GM10248 (cell line): ENCODE measurements at regions of chr3 and their contacts with region 1.

Region 1: DNA sequence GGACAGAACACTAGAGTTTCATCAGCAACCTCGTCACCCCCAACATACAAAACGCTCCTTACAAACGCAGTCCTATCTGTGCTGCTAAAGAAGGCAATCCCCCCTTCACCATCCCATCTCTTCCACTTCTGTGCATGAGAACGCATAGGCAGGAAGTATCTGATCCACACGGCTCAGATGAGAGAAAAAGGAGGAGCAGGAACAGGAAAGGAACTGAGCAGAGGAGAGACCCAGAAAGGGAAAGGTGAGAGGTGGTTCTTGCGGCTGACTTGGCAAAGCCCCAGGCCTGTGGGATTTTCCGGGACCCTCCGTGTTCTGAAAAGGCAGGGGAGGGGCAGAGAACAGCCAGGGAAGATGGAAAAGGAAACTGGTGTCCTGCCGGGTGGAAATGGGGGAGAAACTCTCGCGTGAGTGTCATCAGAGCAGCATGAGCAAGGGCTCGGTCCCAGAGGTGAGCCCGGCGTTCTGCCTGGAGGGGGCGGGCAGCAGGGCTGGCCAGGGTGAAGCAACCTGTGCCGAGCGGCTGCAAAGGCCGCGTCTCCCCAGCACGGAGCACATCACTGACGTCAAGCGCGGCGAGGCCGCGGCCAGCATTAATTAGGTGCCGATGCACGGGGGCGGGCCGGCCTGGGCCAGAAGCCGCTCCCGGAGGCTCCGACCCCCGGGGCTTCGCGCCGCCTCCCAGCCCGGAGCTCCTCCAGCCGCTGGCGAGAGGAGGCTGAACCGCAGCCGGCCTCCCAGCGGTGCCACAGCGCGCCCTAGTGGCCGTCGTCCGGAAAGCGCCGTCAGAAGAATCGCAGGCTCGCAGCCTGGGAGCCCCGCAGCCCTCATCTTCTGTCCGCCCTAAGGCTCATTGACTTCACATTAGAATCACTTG is 35.8 kb downstream of the CPN2 start:
- DNase-seq: peak; percentile 89
- CTCF ChIP-seq: peak; percentile 96

Region 2: GRCh38 chr3:193391902-193392301 is 923.4 kb before region 1 on chr3:
- CTCF ChIA-PET with region 1: no interaction called
- POLR2A ChIA-PET with region 1: no interaction called
- DNase-seq: no peak
- CTCF ChIP-seq: no peak

Region 3: GRCh38 chr3:193665370-193665989 is 649.8 kb before region 1 on chr3:
- CTCF ChIA-PET with region 1: interaction called, 27 read pairs
- POLR2A ChIA-PET with region 1: no interaction called
- DNase-seq: no peak
- CTCF ChIP-seq: peak; percentile 32

Region 4: DNA sequence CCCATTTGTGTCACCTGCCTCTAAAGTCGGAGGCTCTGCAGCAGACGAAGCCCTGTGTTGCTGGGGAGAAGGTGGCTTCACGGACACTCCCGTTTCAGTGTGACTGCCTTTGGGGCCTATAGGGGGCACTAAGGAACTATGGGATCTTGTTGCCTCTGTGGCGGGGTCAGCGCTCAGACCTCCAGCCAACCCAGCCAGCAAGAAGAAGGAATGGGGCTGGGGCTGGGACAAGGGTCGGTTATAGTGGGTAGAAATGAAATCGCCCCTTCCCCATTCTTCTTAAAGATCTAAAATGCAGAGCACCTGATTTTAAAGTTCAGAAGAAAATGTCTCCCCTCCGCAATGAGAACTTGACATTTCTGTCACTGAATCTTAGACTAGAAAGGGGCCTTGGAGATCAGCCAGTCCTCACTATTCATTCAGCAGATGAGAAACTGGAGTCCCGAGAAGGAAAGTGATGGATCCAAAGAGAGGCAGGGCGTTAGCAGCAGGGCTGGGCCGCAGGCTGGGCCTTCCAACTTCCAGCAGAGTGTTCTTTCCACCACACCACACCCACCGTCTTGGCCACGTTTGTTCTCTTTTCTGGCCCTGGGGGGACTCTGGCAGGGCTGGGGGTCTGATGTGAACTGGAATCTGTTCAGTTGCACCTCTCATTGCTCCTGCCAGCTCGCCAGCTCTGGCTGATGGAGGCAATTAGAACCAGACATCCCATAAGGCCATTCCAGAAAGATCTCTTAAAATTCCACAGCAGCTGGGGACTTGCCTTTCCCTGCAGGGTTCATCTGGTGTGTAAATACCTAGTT is 526.9 kb before region 1 on chr3:
- CTCF ChIA-PET with region 1: interaction called, 132 read pairs
- POLR2A ChIA-PET with region 1: no interaction called
- DNase-seq: peak; percentile 87
- CTCF ChIP-seq: peak; percentile 76

Region 5: DNA sequence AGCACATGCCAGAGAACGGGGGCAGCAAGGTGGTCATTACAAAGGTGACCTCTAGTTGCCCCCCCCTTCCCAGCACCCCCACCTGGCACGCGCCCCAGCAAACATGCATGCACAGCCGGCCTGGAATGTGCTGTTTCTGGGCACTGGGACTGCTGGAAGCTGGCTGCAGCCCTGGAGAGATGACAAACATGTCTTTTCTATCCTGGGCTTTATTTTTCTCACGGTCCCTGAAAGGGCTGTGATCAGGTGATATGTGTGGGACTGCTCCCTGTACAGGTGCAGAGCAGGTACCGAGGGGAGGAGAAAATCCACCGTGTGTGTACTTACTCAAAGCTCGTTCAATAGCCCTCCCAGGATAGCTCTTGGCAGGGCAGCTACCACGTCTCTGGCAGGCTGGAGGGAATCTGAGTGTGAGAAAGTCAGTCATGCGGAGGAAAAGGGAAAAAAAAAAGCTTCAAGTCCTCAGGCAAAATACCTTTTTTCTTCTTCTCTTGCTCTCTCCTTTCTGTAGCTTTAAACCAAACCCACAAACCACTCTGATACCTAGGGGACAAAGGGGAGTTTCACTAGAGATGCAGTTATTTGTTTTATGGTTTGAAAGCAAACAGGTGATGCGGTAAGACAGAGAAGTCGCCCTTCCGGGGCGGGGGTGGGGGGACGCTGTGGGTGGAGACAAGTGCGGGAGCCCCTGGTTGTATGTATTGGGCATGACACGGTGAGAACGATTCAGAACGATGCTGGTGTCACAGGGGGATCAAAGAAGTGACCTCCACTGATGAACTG is 184.3 kb before region 1 on chr3:
- CTCF ChIA-PET with region 1: interaction called, 28 read pairs
- POLR2A ChIA-PET with region 1: interaction called, 4 read pairs
- DNase-seq: peak; percentile 57
- CTCF ChIP-seq: no peak

Region 6: DNA sequence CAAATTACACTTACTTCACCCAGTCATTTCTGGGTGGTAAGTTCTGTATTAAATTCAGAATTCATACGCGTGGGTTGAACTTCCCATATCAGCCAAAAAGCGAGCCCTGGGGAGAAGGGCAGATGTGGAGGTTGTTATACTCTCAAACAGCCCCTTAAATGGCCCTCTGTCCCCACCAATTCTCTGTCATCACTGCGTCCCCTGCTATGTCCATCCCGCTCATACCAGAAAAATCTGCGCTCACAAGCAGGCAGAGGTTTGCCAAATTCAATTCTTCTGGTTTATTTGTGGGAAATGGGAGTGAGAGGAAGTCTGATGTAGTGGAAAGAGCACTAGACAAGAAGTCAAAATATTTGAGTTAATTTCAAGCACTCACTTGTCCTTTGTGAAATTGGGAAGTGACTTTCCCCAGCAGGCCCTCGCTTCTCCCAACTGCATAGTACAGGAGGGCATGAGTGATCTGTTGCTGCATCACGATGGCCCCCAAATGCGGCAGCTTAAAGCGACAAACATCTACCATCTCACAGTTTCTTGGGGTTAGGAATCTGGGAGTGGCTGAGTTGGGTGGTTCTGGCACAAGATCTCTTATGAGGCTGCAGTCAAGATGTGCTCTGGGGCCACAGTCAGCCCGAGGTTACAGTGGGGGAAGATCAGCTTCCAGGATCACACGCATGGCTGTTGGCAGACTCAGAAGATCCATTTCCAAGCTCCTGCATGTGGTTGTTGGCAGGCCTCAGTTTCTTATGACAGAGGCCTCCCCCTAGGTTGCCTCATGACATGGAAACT is 31.9 kb before region 1 on chr3:
- CTCF ChIA-PET with region 1: interaction called, 12 read pairs
- POLR2A ChIA-PET with region 1: no interaction called
- DNase-seq: no peak
- CTCF ChIP-seq: no peak

Region 7: DNA sequence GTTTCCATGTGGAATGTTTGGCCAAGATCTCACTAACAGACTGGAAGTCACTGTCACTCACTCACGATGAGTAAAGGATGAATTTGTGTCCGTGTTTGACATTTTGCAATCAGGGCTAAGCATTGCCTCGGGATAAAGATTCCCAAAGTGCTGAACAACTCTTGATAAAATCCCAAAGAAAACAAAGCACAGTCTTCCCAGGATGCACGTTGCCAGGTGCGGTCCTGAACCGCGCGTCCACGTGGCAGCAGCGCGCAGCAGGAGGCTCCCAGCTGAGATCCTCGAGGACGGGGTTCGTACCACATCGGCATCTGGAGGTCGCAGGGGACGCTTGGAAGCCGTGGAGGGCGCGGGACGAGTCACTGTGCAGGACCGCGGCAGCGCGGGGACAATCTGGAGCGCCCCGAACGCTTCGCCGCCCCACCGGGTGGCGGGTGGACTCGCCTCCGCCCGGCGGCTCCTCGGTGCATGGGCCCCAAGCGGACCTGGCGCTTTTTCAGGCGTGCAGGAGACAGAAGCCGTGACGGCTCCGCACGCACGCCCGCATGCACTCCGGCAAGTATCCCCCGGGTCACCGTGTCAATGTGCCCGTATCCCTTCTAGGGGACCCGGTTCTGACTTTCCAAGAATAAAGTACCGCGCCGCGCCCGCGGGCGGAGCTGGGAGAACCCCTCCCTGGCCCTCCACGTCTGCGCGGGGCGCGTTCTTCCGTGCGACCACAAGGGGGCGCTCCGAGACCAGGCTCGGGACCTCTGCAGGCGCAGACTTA is 18.1 kb after region 1 on chr3:
- CTCF ChIA-PET with region 1: interaction called, 18 read pairs
- POLR2A ChIA-PET with region 1: no interaction called
- DNase-seq: peak; percentile 87
- CTCF ChIP-seq: peak; percentile 99

Region 8: GRCh38 chr3:194536871-194537637 is 221.7 kb after region 1 on chr3:
- CTCF ChIA-PET with region 1: no interaction called
- POLR2A ChIA-PET with region 1: no interaction called
- DNase-seq: no peak
- CTCF ChIP-seq: no peak